H1 (cell line): ENCODE measurements at regions of chr1 and their contacts with region 1.

Region 1: DNA sequence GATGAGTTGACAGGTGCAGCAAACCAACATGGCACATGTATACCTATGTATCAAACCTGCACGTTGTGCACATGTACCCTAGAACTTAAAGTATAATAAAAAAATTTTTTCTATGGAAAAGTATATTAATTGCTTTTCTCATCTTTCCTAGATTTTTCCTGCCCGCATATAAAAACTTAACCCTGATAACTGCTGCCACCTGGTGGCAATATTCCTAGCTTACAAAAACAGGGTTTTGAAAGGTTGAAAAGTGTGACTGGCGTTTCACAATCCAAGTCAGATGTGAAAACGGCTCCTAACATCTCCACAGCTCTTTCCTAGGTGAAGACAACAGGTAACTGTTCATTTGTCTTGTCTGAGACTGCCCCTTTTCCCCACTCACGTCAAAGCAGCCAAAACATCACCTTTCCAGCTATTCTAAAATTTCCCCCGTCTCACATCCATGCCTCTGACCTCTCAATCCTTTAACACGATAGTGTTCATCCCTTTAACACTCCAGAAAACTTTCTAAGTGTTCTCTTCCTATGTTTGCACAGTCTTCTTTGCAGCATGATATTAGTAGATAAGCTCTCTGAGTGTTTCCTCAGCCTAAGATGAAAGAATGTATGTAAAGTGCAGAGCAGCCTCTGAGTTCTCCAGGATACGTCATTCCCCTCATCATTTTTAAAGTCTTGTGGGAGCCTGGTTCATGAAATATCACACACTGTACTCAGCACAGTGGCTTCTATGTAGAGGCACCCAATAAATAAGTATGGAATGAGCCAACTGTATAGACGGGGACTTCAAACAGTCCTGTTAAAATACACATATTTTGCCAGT is 27.5 kb downstream of the OVGP1 start:
- DNase-seq: peak in 1 of 2 experiments; percentile 71
- H3K4me3 ChIP-seq: no peak overlapping the region
- H3K27ac ChIP-seq: no peak overlapping the region
- H3K4me1 ChIP-seq: no peaks in the 10 kb centered on the region
- H3K27me3 ChIP-seq: no peaks in the 10 kb centered on the region
- CTCF ChIP-seq: peak in 2 of 3 experiments; percentile 54 to 62; a peak in 3 of 4 replicates
- EP300 ChIP-seq: no peak
- POLR2A ChIP-seq: no peak
- RAD21 ChIP-seq: peak; percentile 75 to 81

Region 2: GRCh38 chr1:111197598-111198284 is 202.3 kb before region 1 on chr1:
- CTCF ChIA-PET with region 1: interaction called, 13 read pairs
- POLR2A ChIA-PET with region 1: no interaction called
- DNase-seq: peak; percentile 54 to 68
- H3K4me3 ChIP-seq: no peak overlapping the region
- H3K27ac ChIP-seq: no peak overlapping the region
- H3K4me1 ChIP-seq: no peaks in the 10 kb centered on the region
- H3K27me3 ChIP-seq: no peaks in the 10 kb centered on the region; a peak in 1 of 7 replicates
- CTCF ChIP-seq: peak; percentile 86 to 87 (median 87)
- EP300 ChIP-seq: no peak
- POLR2A ChIP-seq: no peak
- RAD21 ChIP-seq: peak; percentile 69 to 73

Region 3: GRCh38 chr1:111222308-111223125 is 177.5 kb before region 1 on chr1:
- CTCF ChIA-PET with region 1: interaction called, 44 read pairs
- POLR2A ChIA-PET with region 1: no interaction called
- DNase-seq: peak; percentile 46 to 94
- H3K4me3 ChIP-seq: no peak overlapping the region
- H3K27ac ChIP-seq: no peak overlapping the region
- H3K4me1 ChIP-seq: peaks cover 0 to 8% (median under 1%) of the 10 kb centered on the region in 4 experiments; a peak in 2 of 7 replicates
- H3K27me3 ChIP-seq: no peaks in the 10 kb centered on the region
- CTCF ChIP-seq: peak; percentile 95 to 98 (median 96)
- EP300 ChIP-seq: no peak
- POLR2A ChIP-seq: no peak
- RAD21 ChIP-seq: peak; percentile 99 to 100

Region 4: DNA sequence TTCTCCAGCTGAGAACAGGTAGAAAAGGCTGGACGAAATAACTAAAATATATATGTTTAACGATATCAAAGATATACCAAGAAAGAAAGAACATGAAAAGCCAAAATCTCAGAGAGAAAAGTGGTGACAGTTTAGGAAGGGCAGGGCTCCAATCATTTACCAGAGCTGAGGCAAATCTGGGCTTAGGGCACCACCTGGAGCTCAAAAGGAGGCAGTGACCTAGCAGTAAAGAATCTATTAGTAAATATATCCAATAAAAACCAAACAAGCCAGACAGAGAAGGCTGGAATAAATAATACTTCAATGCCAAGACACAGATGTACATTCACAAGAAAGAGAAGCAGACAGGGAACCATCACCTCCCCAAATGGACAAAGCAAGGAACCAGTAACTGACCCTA is 65.8 kb before region 1 on chr1:
- CTCF ChIA-PET with region 1: interaction called, 17 read pairs
- POLR2A ChIA-PET with region 1: no interaction called
- DNase-seq: no peak
- H3K4me3 ChIP-seq: no peak overlapping the region
- H3K27ac ChIP-seq: no peak overlapping the region
- H3K4me1 ChIP-seq: no peaks in the 10 kb centered on the region
- H3K27me3 ChIP-seq: no peaks in the 10 kb centered on the region
- CTCF ChIP-seq: peak; percentile 37 to 84 (median 72)
- EP300 ChIP-seq: no peak
- POLR2A ChIP-seq: no peak
- RAD21 ChIP-seq: peak; percentile 96

Region 5: DNA sequence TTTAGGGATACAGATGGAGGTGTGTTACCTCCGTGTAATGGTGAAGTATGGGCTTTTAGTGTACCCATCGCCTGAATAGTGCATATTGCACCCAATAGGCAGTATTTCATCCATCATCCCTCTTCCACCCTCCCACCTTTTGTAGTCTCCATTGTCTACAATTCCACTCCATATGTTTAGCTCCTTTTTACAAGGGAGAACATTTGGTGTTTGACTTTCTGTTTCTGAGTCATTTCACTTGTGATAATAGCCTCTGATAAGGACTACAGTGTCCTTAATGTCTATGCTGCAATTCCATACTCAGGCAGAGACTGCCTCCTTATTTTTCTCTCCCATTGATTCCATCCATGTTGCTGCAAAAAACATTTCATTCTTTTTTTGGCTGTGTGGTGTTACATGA is 21.2 kb before region 1 on chr1:
- CTCF ChIA-PET with region 1: interaction called, 10 read pairs
- POLR2A ChIA-PET with region 1: no interaction called
- DNase-seq: no peak
- H3K4me3 ChIP-seq: no peak overlapping the region
- H3K27ac ChIP-seq: no peak overlapping the region
- H3K4me1 ChIP-seq: no peaks in the 10 kb centered on the region
- H3K27me3 ChIP-seq: no peaks in the 10 kb centered on the region
- CTCF ChIP-seq: no peak
- EP300 ChIP-seq: no peak
- POLR2A ChIP-seq: no peak
- RAD21 ChIP-seq: no peak